SK-N-SH (cell line): ENCODE measurements at regions of chr6 and their contacts with region 1.

Region 1: GRCh38 chr6:25223490-25223991 is 55.6 kb upstream of the CARMIL1 start:
- DNase-seq: peak; percentile 64
- H3K4me3 ChIP-seq: peak overlapping the region; percentile 21 to 39
- H3K27ac ChIP-seq: peak overlapping the region in 1 of 2 experiments; percentile 39; a peak in 1 of 4 replicates
- H3K4me1 ChIP-seq: peaks cover 3 to 29% of the 10 kb centered on the region in 2 experiments; a peak in 3 of 4 replicates
- H3K27me3 ChIP-seq: no peaks in the 10 kb centered on the region
- CTCF ChIP-seq: peak; percentile 99
- EP300 ChIP-seq: no peak
- RAD21 ChIP-seq: peak; percentile 95

Region 2: DNA sequence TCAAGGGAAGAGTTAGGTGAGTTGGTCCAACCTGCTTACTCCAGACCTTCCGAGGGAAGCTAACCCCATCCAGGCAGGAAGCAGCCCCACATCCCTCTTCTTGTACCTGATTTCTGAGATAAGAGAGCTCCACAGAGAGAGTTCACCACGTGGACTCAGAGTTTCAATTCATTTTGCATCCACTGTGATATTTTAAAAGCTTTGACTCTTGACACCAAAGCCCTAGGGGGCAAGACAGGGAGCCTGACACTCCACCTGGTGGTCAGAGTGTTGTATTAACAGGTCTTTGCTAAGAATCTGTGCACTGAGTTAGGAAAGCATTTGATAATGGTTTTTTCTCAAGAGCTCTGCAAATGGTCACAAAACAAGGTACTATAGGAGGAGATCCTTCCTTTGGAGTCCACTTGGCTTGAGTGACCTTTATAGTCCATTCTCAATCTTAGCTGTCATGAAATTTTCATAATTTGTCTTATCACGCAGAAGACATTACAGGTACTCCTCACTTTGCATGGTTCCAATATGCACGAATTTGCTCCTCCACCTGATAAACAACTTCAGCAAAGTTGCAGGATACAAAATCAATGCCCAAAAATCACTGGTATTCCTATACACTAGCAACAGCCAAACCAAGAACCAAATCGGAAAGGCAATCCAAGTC is 231.6 kb before region 1 on chr6:
- CTCF ChIA-PET with region 1: no interaction called
- POLR2A ChIA-PET with region 1: no interaction called
- DNase-seq: peak; percentile 51
- H3K4me3 ChIP-seq: no peak overlapping the region; a peak in 1 of 4 replicates
- H3K27ac ChIP-seq: no peak overlapping the region
- H3K4me1 ChIP-seq: peaks cover 0 to 8% of the 10 kb centered on the region in 2 experiments; a peak in 1 of 4 replicates
- H3K27me3 ChIP-seq: no peaks in the 10 kb centered on the region
- CTCF ChIP-seq: peak; percentile 66
- EP300 ChIP-seq: no peak
- RAD21 ChIP-seq: peak; percentile 71

Region 3: GRCh38 chr6:25601800-25602673 is 378.5 kb after region 1 on chr6:
- CTCF ChIA-PET with region 1: interaction called, 34 read pairs
- POLR2A ChIA-PET with region 1: no interaction called
- DNase-seq: peak; percentile 49
- H3K4me3 ChIP-seq: no peak overlapping the region; a peak in 1 of 4 replicates
- H3K27ac ChIP-seq: no peak overlapping the region
- H3K4me1 ChIP-seq: no peaks in the 10 kb centered on the region; a peak in 1 of 4 replicates
- H3K27me3 ChIP-seq: no peaks in the 10 kb centered on the region
- CTCF ChIP-seq: peak; percentile 80
- EP300 ChIP-seq: no peak
- RAD21 ChIP-seq: peak; percentile 85